ENCODE measurements at regions of chr14 and their contacts with region 1.

Region 1: GRCh38 chr14:51651388-51652167 is at the start of gene FRMD6:
- DNase-seq: no peak
- ATAC-seq: peak; percentile 88
- H3K4me3 ChIP-seq: peak within 1 kb of the TSS; percentile 71 to 82
- H3K27ac ChIP-seq: peak within 1 kb of the TSS; percentile 88
- H3K4me1 ChIP-seq: peaks cover 14% of the 10 kb centered on the region
- H3K27me3 ChIP-seq: no peaks in the 10 kb centered on the region
- CTCF ChIP-seq: peak; percentile 81
- total RNA-seq, gene FRMD6: 40.7 TPM

Region 2: DNA sequence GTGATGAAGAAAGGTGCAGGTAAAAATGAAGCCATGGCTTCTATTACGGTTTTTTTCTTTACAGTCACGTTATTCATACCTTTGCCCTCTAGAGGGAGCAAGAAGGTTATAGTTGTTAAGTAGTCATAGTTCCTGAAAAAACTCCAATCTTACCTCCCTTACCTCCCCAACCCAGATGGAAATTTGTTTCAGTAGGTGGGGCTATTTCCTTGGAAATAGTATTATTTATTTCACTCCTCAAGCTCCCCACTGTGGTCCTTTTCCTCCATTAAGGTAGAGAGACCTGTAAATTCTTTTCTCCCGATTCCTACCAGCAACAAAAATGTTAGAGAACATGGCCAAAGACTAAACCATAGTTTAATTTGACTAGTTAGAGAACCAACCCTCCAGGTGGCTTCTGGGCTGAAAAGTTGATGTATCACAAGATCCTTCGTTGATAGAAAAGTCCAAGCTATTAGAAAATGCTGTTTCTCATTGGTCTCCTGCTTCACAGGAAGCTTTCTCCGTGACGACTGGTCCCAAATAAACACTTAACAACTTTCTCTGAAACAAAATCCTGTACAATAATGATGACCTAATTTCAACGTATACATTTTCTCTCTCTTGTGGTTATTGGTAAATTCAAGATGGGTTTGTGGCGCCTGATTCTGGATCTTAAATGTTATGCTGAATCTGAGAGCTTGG is 368.0 kb before region 1 on chr14:
- CTCF ChIA-PET with region 1: no interaction called
- POLR2A ChIA-PET with region 1: no interaction called
- in situ Hi-C with region 1: no loop called
- intact Hi-C with region 1: loop called (anchors 10 kb)
- DNase-seq: peak; percentile 74
- ATAC-seq: peak; percentile 80
- H3K4me3 ChIP-seq: no peak overlapping the region
- H3K27ac ChIP-seq: peak overlapping the region; percentile 9; the same call in 1 of the 2 replicates
- H3K4me1 ChIP-seq: no peaks in the 10 kb centered on the region
- H3K27me3 ChIP-seq: no peaks in the 10 kb centered on the region
- CTCF ChIP-seq: peak; percentile 67; the same call in 1 of the 2 replicates

Region 3: DNA sequence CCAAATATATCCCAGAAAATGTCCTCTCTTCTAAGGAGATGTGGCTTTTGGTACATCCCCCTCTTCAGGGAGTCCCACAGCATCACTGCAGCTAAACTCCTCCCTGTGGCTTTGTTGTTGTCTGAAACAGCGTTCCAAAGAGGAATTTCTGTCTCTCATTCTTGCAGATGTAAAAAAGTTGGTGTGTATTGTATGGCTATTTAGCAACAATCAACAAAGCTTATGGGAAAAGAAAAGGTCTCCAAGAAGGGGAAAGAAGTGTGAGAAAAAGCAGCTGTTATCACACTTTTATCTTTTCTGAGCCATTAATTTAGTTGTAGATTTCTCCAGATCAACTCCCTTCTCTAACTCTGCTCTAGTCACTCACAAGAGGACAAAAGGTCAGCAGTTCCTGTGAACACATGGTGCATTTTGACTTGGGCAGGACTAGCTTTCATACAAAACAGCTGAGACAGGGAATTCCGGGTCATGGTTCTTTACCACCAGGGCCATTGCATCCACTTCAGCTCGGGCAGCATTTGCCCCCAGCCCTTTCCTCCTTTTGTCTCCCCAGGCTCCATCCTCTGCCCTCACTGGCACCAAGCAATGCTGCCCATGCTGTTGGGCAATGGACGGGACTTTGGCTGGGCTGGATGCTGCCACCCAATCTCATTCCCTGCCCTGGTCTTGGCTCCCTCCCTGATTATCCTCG is 226.9 kb before region 1 on chr14:
- CTCF ChIA-PET with region 1: no interaction called
- POLR2A ChIA-PET with region 1: interaction called, 10 read pairs
- in situ Hi-C with region 1: no loop called
- intact Hi-C with region 1: no loop called
- DNase-seq: no peak
- ATAC-seq: no peak
- H3K4me3 ChIP-seq: no peak overlapping the region
- H3K27ac ChIP-seq: no peak overlapping the region
- H3K4me1 ChIP-seq: no peaks in the 10 kb centered on the region
- H3K27me3 ChIP-seq: no peaks in the 10 kb centered on the region
- CTCF ChIP-seq: no peak

Region 4: GRCh38 chr14:51539571-51540037 is 112.0 kb before region 1 on chr14:
- CTCF ChIA-PET with region 1: no interaction called
- POLR2A ChIA-PET with region 1: no interaction called
- in situ Hi-C with region 1: no loop called
- intact Hi-C with region 1: loop called (anchors 5 kb)
- DNase-seq: no peak
- ATAC-seq: peak; percentile 37
- H3K4me3 ChIP-seq: no peak overlapping the region
- H3K27ac ChIP-seq: peak overlapping the region; percentile 66
- H3K4me1 ChIP-seq: no peaks in the 10 kb centered on the region; the same call in 1 of the 2 replicates
- H3K27me3 ChIP-seq: no peaks in the 10 kb centered on the region
- CTCF ChIP-seq: no peak

Region 5: GRCh38 chr14:51780006-51780692 is 128.6 kb after region 1 on chr14:
- CTCF ChIA-PET with region 1: interaction called, 5 read pairs
- POLR2A ChIA-PET with region 1: no interaction called
- in situ Hi-C with region 1: no loop called
- intact Hi-C with region 1: loop called (anchors 2 kb)
- DNase-seq: peak; percentile 15
- ATAC-seq: peak; percentile 82
- H3K4me3 ChIP-seq: no peak overlapping the region
- H3K27ac ChIP-seq: no peak overlapping the region
- H3K4me1 ChIP-seq: no peaks in the 10 kb centered on the region
- H3K27me3 ChIP-seq: peaks cover 10% of the 10 kb centered on the region
- CTCF ChIP-seq: peak; percentile 80

Region 6: DNA sequence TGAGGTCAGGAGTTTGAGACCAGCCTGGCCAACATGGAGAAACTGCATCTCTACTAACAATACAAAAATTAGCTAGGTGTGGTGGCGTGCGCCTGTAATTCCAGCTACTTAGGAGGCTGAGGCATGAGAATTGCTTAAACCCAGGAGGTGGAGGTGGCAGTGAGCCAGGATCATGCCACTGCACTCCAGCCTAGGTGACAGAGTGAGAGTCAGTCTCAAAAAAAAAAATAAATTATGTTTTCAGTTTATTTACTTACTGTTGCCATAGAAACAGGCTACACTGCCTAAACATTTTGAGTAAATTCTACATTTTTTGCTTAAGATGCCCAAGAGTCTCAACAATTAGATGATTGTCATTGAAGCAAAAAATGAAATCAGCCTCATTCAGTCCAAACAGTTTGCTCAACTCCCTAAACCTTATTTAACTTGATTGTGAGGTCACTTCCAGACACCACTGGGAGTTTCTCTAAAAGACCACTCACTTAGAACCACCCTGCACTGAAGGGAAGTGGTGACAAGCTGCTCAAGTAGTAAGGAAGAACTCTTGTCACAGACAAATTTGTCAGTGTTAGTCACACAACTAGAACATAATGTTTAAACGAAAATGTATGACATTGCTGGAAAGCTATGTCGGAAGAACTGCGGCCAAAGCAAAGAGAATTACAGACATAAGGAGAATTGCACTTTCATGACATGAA is 1149.6 kb after region 1 on chr14:
- CTCF ChIA-PET with region 1: no interaction called
- POLR2A ChIA-PET with region 1: no interaction called
- in situ Hi-C with region 1: no loop called
- intact Hi-C with region 1: no loop called
- DNase-seq: no peak
- ATAC-seq: no peak
- H3K4me3 ChIP-seq: no peak overlapping the region
- H3K27ac ChIP-seq: no peak overlapping the region
- H3K4me1 ChIP-seq: no peaks in the 10 kb centered on the region
- H3K27me3 ChIP-seq: no peaks in the 10 kb centered on the region
- CTCF ChIP-seq: no peak

Measured in Panc1 (cell line).